Mammary epithelial cell (primary cell): ENCODE measurements at regions of chr9 and their contacts with region 1.

Region 1: GRCh38 chr9:106883626-106884190 is 20.7 kb downstream of the ZNF462 start:
- DNase-seq: no peak
- H3K4me3 ChIP-seq: no peak overlapping the region
- H3K27ac ChIP-seq: no peak overlapping the region
- H3K4me1 ChIP-seq: peaks cover 83% of the 10 kb centered on the region
- H3K27me3 ChIP-seq: no peaks in the 10 kb centered on the region
- CTCF ChIP-seq: no peak

Region 2: GRCh38 chr9:106897236-106897635 is 13.5 kb after region 1 on chr9:
- CTCF ChIA-PET with region 1: no interaction called
- dilution Hi-C with region 1: no loop called
- in situ Hi-C with region 1: no loop called
- intact Hi-C with region 1: no loop called
- DNase-seq: no peak
- H3K4me3 ChIP-seq: no peak overlapping the region
- H3K27ac ChIP-seq: no peak overlapping the region
- H3K4me1 ChIP-seq: peaks cover 26% of the 10 kb centered on the region
- H3K27me3 ChIP-seq: no peaks in the 10 kb centered on the region
- CTCF ChIP-seq: no peak

Region 3: DNA sequence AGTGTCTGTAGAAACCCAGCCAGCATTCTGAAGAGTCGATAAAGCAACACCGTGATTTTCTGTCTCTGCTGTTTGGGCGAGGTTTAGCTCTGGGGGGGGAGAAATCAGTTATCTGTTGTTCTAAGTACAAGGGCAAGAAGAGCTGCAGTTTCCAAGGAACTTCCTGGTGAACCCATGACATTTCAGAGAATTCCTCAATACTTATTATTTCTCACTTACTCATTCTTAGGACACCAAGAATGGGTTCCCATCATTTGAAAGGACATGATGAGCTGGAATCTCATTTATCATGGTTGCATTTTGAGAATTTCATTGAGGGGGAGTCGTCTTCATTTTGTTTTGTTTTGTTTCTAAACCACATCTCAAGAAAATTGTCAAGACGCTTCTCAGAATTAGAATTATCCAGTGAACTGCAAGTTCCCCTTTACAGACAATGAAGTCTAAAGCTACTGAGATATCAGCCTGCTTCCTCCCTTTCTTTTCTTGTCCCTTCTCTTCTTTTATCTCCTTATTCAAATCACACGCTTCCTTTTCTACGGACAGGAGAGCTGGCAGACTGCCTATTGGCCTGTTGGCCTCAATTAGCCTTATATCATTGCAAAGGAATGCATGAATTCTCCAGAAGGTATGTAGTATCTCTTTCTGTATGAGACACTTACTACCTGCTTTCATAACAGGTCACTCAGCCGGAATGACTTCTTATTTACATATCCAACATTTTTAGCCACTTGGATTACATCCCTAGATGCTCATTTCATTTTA is 33.0 kb after region 1 on chr9:
- CTCF ChIA-PET with region 1: interaction called, 3 read pairs
- dilution Hi-C with region 1: no loop called
- in situ Hi-C with region 1: no loop called
- intact Hi-C with region 1: loop called (anchors 5 kb)
- DNase-seq: peak; percentile 87
- H3K4me3 ChIP-seq: peak overlapping the region in 1 of 3 experiments; percentile 3
- H3K27ac ChIP-seq: peak overlapping the region; percentile 68
- H3K4me1 ChIP-seq: peaks cover 35% of the 10 kb centered on the region
- H3K27me3 ChIP-seq: no peaks in the 10 kb centered on the region
- CTCF ChIP-seq: no peak

Region 4: DNA sequence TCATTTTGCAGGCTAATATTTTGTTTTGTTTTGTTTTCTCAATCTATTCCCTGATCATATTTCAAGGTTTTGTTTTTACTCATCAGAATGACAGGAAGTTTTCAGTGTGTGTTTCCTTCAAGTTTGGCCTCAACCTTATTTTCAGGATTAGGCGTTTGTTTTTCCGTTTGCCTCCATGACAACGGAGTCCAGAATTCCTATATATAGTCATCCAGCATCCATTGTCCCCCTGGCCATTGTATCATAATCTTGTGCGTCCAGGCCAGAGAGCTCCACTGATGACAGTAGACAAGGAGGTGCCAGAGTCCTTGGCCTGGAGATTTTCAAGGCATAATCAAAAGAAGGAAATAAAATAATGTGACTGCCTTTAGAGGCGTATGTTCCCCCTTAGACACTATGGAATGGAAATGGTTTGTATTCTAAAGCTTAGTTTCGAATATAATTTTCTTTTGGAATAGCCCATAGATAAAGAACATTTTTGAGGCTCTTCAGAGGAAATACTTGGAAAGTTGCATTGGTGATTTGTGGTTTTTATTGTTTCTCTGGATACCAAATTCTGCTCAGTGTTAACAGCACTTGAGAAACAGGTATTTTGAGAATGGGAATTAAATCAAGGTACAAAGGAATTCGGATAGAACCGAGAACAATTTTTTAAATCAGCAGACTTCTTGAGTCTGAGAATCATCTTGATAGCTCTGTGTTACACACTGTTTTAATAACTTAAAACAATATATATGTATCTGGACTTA is 79.1 kb after region 1 on chr9:
- CTCF ChIA-PET with region 1: no interaction called
- dilution Hi-C with region 1: no loop called
- in situ Hi-C with region 1: no loop called
- intact Hi-C with region 1: no loop called
- DNase-seq: no peak
- H3K4me3 ChIP-seq: no peak overlapping the region
- H3K27ac ChIP-seq: peak overlapping the region; percentile 28
- H3K4me1 ChIP-seq: peaks cover 29% of the 10 kb centered on the region
- H3K27me3 ChIP-seq: no peaks in the 10 kb centered on the region
- CTCF ChIP-seq: no peak

Region 5: DNA sequence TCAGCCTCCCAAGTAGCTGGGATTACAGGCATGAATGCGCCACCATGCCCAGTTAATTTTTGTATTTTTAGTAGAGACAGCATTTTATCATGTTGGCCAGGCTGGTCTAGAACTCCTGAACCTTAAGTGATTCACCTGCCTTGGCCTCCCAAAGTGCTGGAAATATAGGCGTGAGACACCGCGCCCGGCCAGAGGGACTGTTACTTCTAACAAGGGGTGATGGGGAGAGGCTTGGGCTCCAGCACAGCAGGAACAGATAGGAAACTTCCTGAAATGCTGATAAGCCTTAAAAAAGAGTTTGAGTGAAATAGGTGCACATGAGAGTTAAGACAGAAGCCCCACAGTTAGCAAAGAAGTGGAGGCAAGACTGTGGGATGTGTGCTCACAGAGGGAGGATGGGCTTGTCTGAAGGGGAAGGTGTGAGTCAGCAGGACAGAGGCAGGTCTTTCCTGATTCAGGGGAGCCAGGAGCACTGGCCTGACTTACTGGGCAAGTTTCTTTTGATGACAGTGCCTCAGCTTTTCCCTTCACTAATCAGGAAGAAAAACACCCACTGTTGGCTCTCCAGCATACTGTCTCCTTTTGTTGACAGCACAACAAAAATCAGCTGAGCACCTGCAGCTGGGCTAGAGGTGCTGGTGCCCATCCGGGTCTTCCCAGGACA is 467.8 kb after region 1 on chr9:
- CTCF ChIA-PET with region 1: no interaction called
- dilution Hi-C with region 1: no loop called
- in situ Hi-C with region 1: no loop called
- intact Hi-C with region 1: no loop called
- DNase-seq: peak; percentile 77
- H3K4me3 ChIP-seq: no peak overlapping the region
- H3K27ac ChIP-seq: no peak overlapping the region
- H3K4me1 ChIP-seq: no peaks in the 10 kb centered on the region
- H3K27me3 ChIP-seq: no peaks in the 10 kb centered on the region
- CTCF ChIP-seq: no peak